Naive thymus-derived CD4-positive, alpha-beta T cell (primary cell): ENCODE measurements at regions of chr19 and their contacts with region 1.

Region 1: DNA sequence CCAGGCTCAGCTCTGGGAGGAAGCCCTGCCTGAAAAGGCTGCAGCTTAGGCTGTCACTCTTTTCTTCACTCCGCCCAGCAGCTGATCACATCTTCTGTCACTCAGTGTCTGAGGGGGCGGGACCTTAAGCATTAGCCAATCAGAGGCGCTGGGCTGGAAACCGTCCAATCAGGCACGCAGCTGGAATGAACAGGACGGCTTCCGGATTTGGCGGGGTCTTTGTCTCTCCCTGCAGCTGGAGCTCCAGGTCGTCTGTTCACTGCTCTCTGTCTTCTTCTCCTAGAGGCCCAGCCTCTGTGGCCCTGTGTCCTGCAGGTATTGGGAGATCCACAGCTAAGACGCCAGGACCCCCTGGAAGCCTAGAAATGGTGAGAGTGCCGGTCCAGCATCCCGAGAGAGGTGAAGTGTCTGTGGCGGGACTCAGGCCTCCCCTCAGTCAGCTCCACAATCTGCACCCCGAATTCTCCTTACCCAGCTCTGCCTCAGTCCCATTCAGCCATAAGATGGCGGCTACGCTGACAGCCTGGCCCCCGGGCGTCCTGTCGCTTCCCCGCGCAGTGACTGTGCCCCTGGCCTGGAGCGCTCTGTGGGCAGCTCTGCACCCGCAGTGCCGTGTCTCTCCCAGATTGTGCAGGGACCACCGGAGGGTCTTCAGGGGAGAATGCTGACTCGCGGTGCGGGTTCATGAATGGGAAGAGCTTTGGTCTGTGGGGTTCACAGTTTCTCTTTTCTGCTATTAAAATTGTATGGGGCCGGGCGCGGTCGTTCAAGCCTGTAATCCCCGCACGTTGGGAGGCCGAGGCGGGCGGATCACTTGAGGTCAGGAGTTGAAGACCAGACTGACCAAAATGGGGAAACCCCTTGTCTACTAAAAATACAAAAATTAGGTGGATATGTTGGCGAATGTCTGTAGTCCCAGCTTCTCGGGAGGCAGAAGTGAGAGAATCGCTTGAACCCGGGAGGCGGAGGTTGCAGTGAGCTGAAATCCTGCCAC is at the start of gene ZNF66:
- DNase-seq: peak; percentile 84 to 96 (median 95)
- ATAC-seq: peak; percentile 99
- H3K4me3 ChIP-seq: peak within 1 kb of the TSS; percentile 99
- H3K4me3 Mint-ChIP-seq: peak within 1 kb of the TSS; percentile 92 to 100 (median 99)
- H3K27ac ChIP-seq: peak within 1 kb of the TSS; percentile 81
- H3K27ac Mint-ChIP-seq: peak within 1 kb of the TSS; percentile 86 to 97 (median 93)
- H3K4me1 ChIP-seq: peaks cover 0 to 5% of the 10 kb centered on the region in 2 donors
- H3K4me1 Mint-ChIP-seq: peaks cover 3 to 44% (median 31%) of the 10 kb centered on the region in 7 donors
- H3K27me3 ChIP-seq: no peaks in the 10 kb centered on the region
- H3K27me3 Mint-ChIP-seq: no peaks in the 10 kb centered on the region
- total RNA-seq, gene ZNF66: 7.6 to 18.5 (median 12.2) TPM

Region 2: DNA sequence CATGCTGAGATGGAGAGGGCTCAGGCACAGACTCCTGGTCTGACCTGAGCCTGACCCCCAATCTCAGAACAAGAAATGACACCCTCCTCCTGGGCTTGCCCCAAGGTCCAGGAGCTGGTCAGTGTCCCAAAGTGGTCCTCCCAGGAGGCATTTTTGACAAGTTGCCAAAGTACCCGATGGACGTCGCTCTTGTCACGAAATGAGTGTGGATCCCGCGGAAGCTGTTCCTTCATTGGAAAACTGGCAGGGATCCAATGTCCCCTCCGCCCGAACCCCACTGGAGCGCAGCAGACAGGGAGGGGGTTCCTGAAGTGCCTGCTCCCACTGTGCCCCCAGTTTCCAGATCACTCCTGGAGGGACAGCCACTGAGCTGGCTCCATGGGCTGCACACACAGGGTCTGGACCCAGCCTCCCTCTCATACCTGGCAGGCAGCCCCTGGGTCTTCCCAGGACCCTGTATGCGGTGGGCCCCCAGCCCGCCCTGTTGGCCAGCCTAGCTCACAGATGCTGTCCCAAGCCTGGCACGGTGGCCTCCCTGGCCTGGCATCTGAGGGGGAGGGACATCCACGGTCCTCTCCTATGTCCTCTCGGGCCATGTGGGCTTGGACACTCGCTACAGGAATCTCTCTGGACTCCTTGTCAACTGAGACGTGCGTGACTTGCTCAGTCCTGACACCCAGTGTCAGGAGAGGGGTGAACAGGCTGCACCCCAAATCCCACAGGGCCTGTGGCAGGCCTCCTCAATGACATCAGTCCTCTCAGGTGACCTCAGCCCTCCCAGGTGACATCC is 1030.7 kb before region 1 on chr19:
- CTCF ChIA-PET with region 1: no interaction called
- POLR2A ChIA-PET with region 1: no interaction called
- intact Hi-C with region 1: no loop called
- DNase-seq: no peak
- ATAC-seq: peak; percentile 35
- H3K4me3 ChIP-seq: no peak overlapping the region
- H3K4me3 Mint-ChIP-seq: no peak overlapping the region
- H3K27ac ChIP-seq: no peak overlapping the region
- H3K27ac Mint-ChIP-seq: no peak overlapping the region
- H3K4me1 ChIP-seq: no peaks in the 10 kb centered on the region
- H3K4me1 Mint-ChIP-seq: no peaks in the 10 kb centered on the region
- H3K27me3 ChIP-seq: no peaks in the 10 kb centered on the region
- H3K27me3 Mint-ChIP-seq: no peaks in the 10 kb centered on the region

Region 3: GRCh38 chr19:20077791-20078463 is 698.5 kb before region 1 on chr19 and contains the start of gene ZNF90:
- CTCF ChIA-PET with region 1: no interaction called
- POLR2A ChIA-PET with region 1: no interaction called
- intact Hi-C with region 1: loop called in 1 of 2 experiments (anchors 5 kb)
- DNase-seq: peak; percentile 57 to 90 (median 84)
- ATAC-seq: peak; percentile 99
- H3K4me3 ChIP-seq: peak within 1 kb of the TSS; percentile 86
- H3K4me3 Mint-ChIP-seq: peak within 1 kb of the TSS; percentile 86 to 89 (median 88)
- H3K27ac ChIP-seq: no peak within 1 kb of the TSS
- H3K27ac Mint-ChIP-seq: peak within 1 kb of the TSS; percentile 31 to 82 (median 54)
- H3K4me1 ChIP-seq: peaks cover 4 to 8% of the 10 kb centered on the region in 2 donors
- H3K4me1 Mint-ChIP-seq: peaks cover 0 to 27% (median 14%) of the 10 kb centered on the region in 7 donors
- H3K27me3 ChIP-seq: no peaks in the 10 kb centered on the region
- H3K27me3 Mint-ChIP-seq: no peaks in the 10 kb centered on the region
- total RNA-seq, gene ZNF90: 3.4 to 7.7 (median 4.5) TPM

Region 4: DNA sequence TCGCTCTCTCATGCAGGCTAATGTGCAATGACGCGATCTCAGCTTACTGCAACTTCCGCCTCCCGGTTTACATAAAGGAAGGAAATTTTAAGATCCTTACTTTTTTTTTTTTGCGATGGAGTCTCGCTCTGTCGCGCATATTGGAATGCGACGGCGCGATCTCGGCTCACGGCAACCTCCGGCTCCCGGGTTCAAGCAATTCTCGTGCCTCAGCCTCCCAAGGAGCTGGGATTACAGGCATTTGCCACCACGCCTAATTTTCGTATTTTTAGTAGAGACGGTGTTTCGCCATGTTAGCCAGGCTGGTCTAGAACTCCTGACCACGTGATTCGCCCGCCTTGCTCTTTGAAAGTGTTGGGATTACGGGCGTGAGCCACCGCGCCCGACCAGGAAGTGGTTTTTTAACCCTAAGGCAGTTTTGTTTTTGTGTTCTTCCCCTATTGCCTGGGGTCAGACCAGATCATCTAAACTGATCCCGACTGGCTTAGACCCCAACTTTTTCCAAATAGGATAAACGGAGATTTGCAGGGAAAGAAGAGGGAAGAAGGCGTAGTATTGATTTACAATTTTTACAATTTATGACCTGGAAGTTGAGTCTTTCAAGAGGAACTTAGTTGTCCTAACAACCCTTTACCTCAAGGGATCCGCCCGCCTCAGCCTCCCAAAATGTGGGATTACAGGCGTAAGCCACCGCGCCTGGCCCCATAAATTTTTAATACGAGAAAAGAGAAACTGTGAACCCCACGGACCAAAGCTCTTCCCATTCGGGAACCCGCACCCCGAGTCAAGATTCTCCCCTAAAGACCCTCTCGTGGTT is 352.8 kb before region 1 on chr19:
- CTCF ChIA-PET with region 1: no interaction called
- POLR2A ChIA-PET with region 1: no interaction called
- intact Hi-C with region 1: loop called (anchors 1 to 10 kb)
- DNase-seq: peak in 7 of 9 donors; percentile 17 to 30 (median 24)
- ATAC-seq: no peak
- H3K4me3 ChIP-seq: peak overlapping the region; percentile 91
- H3K4me3 Mint-ChIP-seq: peak overlapping the region; percentile 89 to 98 (median 93)
- H3K27ac ChIP-seq: peak overlapping the region; percentile 72
- H3K27ac Mint-ChIP-seq: peak overlapping the region; percentile 51 to 96 (median 89)
- H3K4me1 ChIP-seq: peaks cover 0 to 3% of the 10 kb centered on the region in 2 donors
- H3K4me1 Mint-ChIP-seq: peaks cover 4 to 29% (median 16%) of the 10 kb centered on the region in 7 donors
- H3K27me3 ChIP-seq: no peaks in the 10 kb centered on the region
- H3K27me3 Mint-ChIP-seq: no peaks in the 10 kb centered on the region

Region 5: DNA sequence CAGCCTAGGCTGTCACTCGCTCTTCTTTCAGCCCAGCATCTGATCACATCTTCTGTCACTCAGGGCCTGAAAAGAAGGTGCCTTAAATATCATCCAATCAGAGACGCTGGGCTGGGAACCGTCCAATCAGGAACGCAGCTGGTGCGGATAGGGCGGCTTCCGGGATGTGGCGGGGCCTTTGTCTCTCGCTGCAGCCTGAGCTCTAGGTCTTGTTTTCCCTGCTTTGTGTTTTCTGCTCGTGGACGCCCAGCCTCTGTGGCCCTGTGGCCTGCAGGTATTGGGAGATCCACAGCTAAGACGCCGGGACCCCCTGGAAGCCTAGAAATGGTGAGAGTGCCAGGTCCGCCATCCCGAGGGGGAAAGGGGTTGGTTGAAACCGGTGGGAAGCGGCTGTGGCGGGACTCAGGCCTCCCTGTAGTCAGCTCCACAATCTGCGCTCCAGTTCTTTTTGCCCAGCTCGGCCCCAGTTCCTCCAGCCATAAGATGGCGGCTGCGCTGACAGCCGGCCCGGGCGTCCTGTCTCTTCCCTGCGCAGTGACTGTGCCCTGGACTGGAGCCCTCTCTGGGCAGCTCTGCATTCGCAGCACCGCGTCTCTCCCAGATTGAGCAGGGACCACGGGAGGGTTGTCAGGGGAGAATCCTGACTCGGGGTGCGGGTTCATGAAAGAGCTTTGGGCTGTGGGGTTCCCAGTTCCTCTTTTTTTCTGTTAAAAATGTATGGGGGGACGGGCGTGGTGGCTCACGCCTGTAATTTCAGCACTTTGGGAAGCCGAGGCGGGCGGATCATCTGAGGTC is 146.9 kb after region 1 on chr19 and contains the start of gene ZNF85:
- CTCF ChIA-PET with region 1: interaction called, 4 read pairs
- POLR2A ChIA-PET with region 1: interaction called, 7 read pairs
- intact Hi-C with region 1: loop called (anchors 1 kb)
- DNase-seq: peak; percentile 69 to 95 (median 92)
- ATAC-seq: peak; percentile 99
- H3K4me3 ChIP-seq: peak within 1 kb of the TSS; percentile 66
- H3K4me3 Mint-ChIP-seq: peak within 1 kb of the TSS; percentile 92 to 98 (median 95)
- H3K27ac ChIP-seq: peak within 1 kb of the TSS; percentile 63
- H3K27ac Mint-ChIP-seq: peak within 1 kb of the TSS; percentile 87 to 98 (median 93)
- H3K4me1 ChIP-seq: peaks cover 0 to 4% of the 10 kb centered on the region in 2 donors
- H3K4me1 Mint-ChIP-seq: peaks cover 4 to 28% (median 14%) of the 10 kb centered on the region in 7 donors
- H3K27me3 ChIP-seq: no peaks in the 10 kb centered on the region
- H3K27me3 Mint-ChIP-seq: no peaks in the 10 kb centered on the region
- total RNA-seq, gene ZNF85: 4.3 to 10.4 (median 7.3) TPM

Region 6: GRCh38 chr19:21328885-21329605 is 552.7 kb after region 1 on chr19 and contains the start of gene ZNF708:
- CTCF ChIA-PET with region 1: no interaction called
- POLR2A ChIA-PET with region 1: interaction called, 3 read pairs
- intact Hi-C with region 1: loop called in 1 of 2 experiments (anchors 2 kb)
- DNase-seq: peak; percentile 42 to 80 (median 71)
- ATAC-seq: peak; percentile 99
- H3K4me3 ChIP-seq: peak within 1 kb of the TSS; percentile 94
- H3K4me3 Mint-ChIP-seq: peak within 1 kb of the TSS; percentile 93 to 99 (median 97)
- H3K27ac ChIP-seq: peak within 1 kb of the TSS; percentile 92
- H3K27ac Mint-ChIP-seq: peak within 1 kb of the TSS; percentile 96 to 100 (median 99)
- H3K4me1 ChIP-seq: peaks cover 6 to 14% of the 10 kb centered on the region in 2 donors
- H3K4me1 Mint-ChIP-seq: peaks cover 24 to 47% (median 31%) of the 10 kb centered on the region in 7 donors
- H3K27me3 ChIP-seq: no peaks in the 10 kb centered on the region
- H3K27me3 Mint-ChIP-seq: no peaks in the 10 kb centered on the region
- total RNA-seq, gene ZNF708: 21.2 to 48.0 (median 24.2) TPM

Region 7: DNA sequence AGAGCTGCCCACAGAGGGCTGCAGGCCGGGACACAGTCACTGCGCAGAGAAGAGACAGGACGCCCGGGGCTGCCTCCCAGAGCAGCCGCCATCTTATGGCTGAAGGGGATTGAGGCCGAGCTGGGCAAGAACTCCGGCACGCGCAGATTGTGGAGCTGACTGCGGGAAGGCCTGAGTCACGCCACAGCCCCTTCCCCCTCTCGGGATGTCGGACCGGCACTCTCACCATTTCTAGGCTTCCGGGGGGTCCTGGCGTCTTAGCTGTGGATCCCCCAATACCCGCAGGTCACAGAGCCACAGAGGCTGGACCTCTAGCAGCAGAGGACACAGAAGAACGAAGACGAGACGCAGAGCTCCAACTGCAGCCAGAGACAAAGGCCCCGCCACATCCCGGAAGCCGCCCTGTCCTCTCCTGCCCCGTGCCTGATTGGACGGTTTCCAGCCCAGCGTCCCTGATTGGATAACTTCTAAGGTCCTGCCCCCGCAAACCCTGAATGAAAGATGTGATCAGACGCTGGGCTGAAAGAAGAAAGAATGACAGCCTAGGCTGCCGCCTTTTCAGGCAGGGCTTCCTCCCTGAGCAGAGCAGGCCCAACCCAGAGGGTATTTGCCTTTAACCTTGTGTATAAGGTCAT is 1059.5 kb after region 1 on chr19 and contains the start of gene ZNF43:
- CTCF ChIA-PET with region 1: no interaction called
- POLR2A ChIA-PET with region 1: no interaction called
- intact Hi-C with region 1: loop called (anchors 10 kb)
- DNase-seq: peak; percentile 76 to 96 (median 93)
- ATAC-seq: peak; percentile 99
- H3K4me3 ChIP-seq: peak within 1 kb of the TSS; percentile 97
- H3K4me3 Mint-ChIP-seq: peak within 1 kb of the TSS; percentile 93 to 99 (median 98)
- H3K27ac ChIP-seq: peak within 1 kb of the TSS; percentile 88
- H3K27ac Mint-ChIP-seq: peak within 1 kb of the TSS; percentile 96 to 99 (median 98)
- H3K4me1 ChIP-seq: peaks cover 5 to 9% of the 10 kb centered on the region in 2 donors
- H3K4me1 Mint-ChIP-seq: peaks cover 3 to 48% (median 35%) of the 10 kb centered on the region in 7 donors
- H3K27me3 ChIP-seq: no peaks in the 10 kb centered on the region
- H3K27me3 Mint-ChIP-seq: no peaks in the 10 kb centered on the region
- total RNA-seq, gene ZNF43: 20.5 to 39.3 (median 36.2) TPM

Region 8: GRCh38 chr19:22634450-22634827 is 1858.1 kb after region 1 on chr19:
- CTCF ChIA-PET with region 1: no interaction called
- POLR2A ChIA-PET with region 1: no interaction called
- intact Hi-C with region 1: loop called in 1 of 2 experiments (anchors 10 kb)
- DNase-seq: no peak
- ATAC-seq: no peak
- H3K4me3 ChIP-seq: peak overlapping the region; percentile 63
- H3K4me3 Mint-ChIP-seq: peak overlapping the region; percentile 70 to 98 (median 93)
- H3K27ac ChIP-seq: peak overlapping the region; percentile 55
- H3K27ac Mint-ChIP-seq: peak overlapping the region in 8 of 9 donors; percentile 59 to 95 (median 82)
- H3K4me1 ChIP-seq: no peaks in the 10 kb centered on the region
- H3K4me1 Mint-ChIP-seq: peaks cover 0 to 16% (median 5%) of the 10 kb centered on the region in 7 donors
- H3K27me3 ChIP-seq: no peaks in the 10 kb centered on the region
- H3K27me3 Mint-ChIP-seq: no peaks in the 10 kb centered on the region